A549 (cell line): ENCODE measurements at regions of chr5 and their contacts with region 1.

Region 1: GRCh38 chr5:174920906-174921550 is 196.6 kb downstream of the MSX2 start:
- DNase-seq: no peak
- ATAC-seq: no peak
- H3K4me3 ChIP-seq: no peak overlapping the region
- H3K27ac ChIP-seq: no peak overlapping the region
- H3K4me1 ChIP-seq: no peaks in the 10 kb centered on the region
- CTCF ChIP-seq: no peak
- EP300 ChIP-seq: no peak
- POLR2A ChIP-seq: no peak
- RAD21 ChIP-seq: no peak

Region 2: GRCh38 chr5:174935854-174936474 is 14.9 kb after region 1 on chr5:
- CTCF ChIA-PET with region 1: interaction called, 35 read pairs
- POLR2A ChIA-PET with region 1: no interaction called
- DNase-seq: peak; percentile 57 to 68
- ATAC-seq: peak; percentile 93 to 97
- H3K4me3 ChIP-seq: no peak overlapping the region
- H3K27ac ChIP-seq: no peak overlapping the region
- H3K4me1 ChIP-seq: no peaks in the 10 kb centered on the region
- CTCF ChIP-seq: peak; percentile 88
- EP300 ChIP-seq: no peak
- POLR2A ChIP-seq: no peak
- RAD21 ChIP-seq: peak; percentile 90 to 91

Region 3: GRCh38 chr5:174951146-174951780 is 30.2 kb after region 1 on chr5:
- CTCF ChIA-PET with region 1: no interaction called
- POLR2A ChIA-PET with region 1: no interaction called
- DNase-seq: peak; percentile 81
- ATAC-seq: peak; percentile 96 to 98
- H3K4me3 ChIP-seq: no peak overlapping the region
- H3K27ac ChIP-seq: peak overlapping the region; percentile 10 to 46; a peak in 3 of 6 replicates
- H3K4me1 ChIP-seq: no peaks in the 10 kb centered on the region
- CTCF ChIP-seq: peak; percentile 90
- EP300 ChIP-seq: no peak
- POLR2A ChIP-seq: no peak
- RAD21 ChIP-seq: peak; percentile 96 to 97